Naive thymus-derived CD4-positive, alpha-beta T cell (primary cell): ENCODE measurements at regions of chr1 and their contacts with region 1.

Region 1: DNA sequence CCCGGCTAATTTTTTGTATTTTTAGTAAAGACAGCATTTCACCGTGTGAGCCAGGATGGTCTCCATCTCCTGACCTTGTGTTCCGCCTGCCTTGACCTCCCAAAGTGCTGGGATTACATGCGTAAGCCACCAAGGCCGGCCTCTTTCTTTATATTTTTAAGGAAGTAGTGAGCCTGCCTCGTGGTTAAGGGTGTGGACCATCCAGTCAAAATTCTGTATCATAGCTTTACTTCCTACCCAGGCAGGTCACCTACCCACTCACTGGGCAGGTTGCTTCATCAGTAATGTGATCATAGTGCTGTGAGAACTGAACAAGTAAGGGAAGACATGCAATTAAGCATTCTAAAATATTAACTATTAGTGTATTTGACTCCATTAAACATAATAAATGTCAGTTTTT is 8.1 kb upstream of the ACOT7 start:
- DNase-seq: no peak
- ATAC-seq: peak; percentile 77
- H3K4me3 ChIP-seq: no peak overlapping the region
- H3K4me3 Mint-ChIP-seq: no peak overlapping the region
- H3K27ac ChIP-seq: no peak overlapping the region
- H3K27ac Mint-ChIP-seq: no peak overlapping the region
- H3K4me1 ChIP-seq: no peaks in the 10 kb centered on the region
- H3K4me1 Mint-ChIP-seq: peaks cover 5 to 20% (median 5%) of the 10 kb centered on the region in 7 donors
- H3K27me3 ChIP-seq: no peaks in the 10 kb centered on the region
- H3K27me3 Mint-ChIP-seq: peaks cover 0 to 35% (median 0%) of the 10 kb centered on the region in 5 donors

Region 2: GRCh38 chr1:6359216-6360116 is 42.2 kb before region 1 on chr1:
- CTCF ChIA-PET with region 1: interaction called, 13 read pairs
- POLR2A ChIA-PET with region 1: interaction called, 4 read pairs
- intact Hi-C with region 1: loop called in 1 of 2 experiments (anchors 1 kb)
- DNase-seq: peak in 7 of 9 donors; percentile 31 to 62 (median 34)
- ATAC-seq: peak; percentile 66
- H3K4me3 ChIP-seq: peak overlapping the region; percentile 57
- H3K4me3 Mint-ChIP-seq: peak overlapping the region; percentile 52 to 83 (median 73)
- H3K27ac ChIP-seq: peak overlapping the region; percentile 65
- H3K27ac Mint-ChIP-seq: peak overlapping the region; percentile 82 to 96 (median 89)
- H3K4me1 ChIP-seq: peaks cover 28 to 41% of the 10 kb centered on the region in 2 donors
- H3K4me1 Mint-ChIP-seq: peaks cover 12 to 66% (median 55%) of the 10 kb centered on the region in 7 donors
- H3K27me3 ChIP-seq: no peaks in the 10 kb centered on the region
- H3K27me3 Mint-ChIP-seq: no peaks in the 10 kb centered on the region

Region 3: GRCh38 chr1:7265771-7266648 is 864.3 kb after region 1 on chr1:
- CTCF ChIA-PET with region 1: no interaction called
- POLR2A ChIA-PET with region 1: no interaction called
- intact Hi-C with region 1: no loop called
- DNase-seq: no peak
- ATAC-seq: no peak
- H3K4me3 ChIP-seq: no peak overlapping the region
- H3K4me3 Mint-ChIP-seq: no peak overlapping the region
- H3K27ac ChIP-seq: no peak overlapping the region
- H3K27ac Mint-ChIP-seq: no peak overlapping the region
- H3K4me1 ChIP-seq: no peaks in the 10 kb centered on the region
- H3K4me1 Mint-ChIP-seq: no peaks in the 10 kb centered on the region
- H3K27me3 ChIP-seq: no peaks in the 10 kb centered on the region
- H3K27me3 Mint-ChIP-seq: peaks cover 3 to 51% (median 37%) of the 10 kb centered on the region in 5 donors